BJ (cell line): ENCODE measurements at regions of chr14 and their contacts with region 1.

Region 1: GRCh38 chr14:94600148-94600545 is 12.0 kb upstream of the SERPINA3 start:
- DNase-seq: no peak
- H3K4me3 ChIP-seq: no peak overlapping the region
- H3K27me3 ChIP-seq: no peaks in the 10 kb centered on the region; the same call in 1 of the 2 replicates
- CTCF ChIP-seq: no peak

Region 2: DNA sequence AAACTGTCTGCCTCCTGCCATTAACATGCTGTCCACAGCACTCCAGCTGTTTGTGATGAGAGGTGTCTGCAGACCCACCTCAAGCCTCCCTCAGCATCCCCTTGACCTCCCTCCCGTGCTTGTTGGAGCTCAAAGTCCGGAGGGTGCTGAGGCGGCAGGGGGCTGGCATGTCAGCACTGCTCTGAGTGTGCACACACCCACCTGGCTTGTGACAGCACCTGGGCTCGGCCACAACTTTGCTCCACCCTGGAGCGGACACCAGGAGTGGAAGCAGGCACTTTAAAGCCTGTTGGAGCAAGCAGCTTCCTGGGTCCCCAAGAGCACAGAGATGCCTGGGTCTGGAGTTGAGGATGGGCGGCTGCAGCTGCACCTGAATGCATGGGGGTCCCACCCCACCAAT is 33.0 kb after region 1 on chr14:
- CTCF ChIA-PET with region 1: no interaction called
- POLR2A ChIA-PET with region 1: interaction called, 13 read pairs
- DNase-seq: no peak
- H3K4me3 ChIP-seq: no peak overlapping the region
- H3K27me3 ChIP-seq: no peaks in the 10 kb centered on the region
- CTCF ChIP-seq: no peak